AG04449 (cell line): ENCODE measurements at regions of chr10 and their contacts with region 1.

Region 1: DNA sequence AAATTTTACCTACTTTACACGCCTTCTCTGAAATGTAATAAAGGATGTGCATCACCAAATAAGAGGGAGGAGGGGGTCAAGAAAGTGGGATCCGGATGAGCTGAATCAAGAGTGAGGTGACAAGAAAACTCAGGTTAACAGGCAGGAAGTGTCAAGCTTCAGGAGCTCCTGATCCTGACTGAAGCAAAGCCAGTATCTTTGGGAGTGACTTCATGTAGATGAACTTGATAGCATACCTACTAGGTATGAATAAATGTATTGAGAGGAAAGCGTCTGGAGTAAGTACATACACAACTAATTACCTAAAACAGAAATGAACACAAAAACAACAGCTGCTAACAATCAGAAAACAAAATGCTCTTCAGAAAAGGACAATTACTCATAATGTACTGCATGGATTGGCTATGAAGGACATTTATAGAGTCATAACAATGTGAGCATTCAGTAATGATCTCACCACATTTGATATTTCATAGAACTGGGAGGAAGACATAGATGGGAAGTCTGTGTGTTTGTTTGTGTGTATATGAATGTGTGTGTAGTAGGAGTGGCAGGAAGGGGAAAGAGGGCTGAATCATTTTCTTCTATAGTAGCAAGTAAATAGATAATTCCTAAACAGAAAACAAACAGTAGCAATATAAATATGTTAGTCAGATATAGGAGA is 29.4 kb downstream of the PRKG1 start:
- DNase-seq: no peak
- H3K4me3 ChIP-seq: no peak overlapping the region
- CTCF ChIP-seq: no peak

Region 2: GRCh38 chr10:51092402-51092801 is 11.3 kb before region 1 on chr10:
- CTCF ChIA-PET with region 1: interaction called, 14 read pairs
- POLR2A ChIA-PET with region 1: no interaction called
- DNase-seq: no peak
- H3K4me3 ChIP-seq: no peak overlapping the region
- CTCF ChIP-seq: no peak

Region 3: GRCh38 chr10:51196508-51197175 is 93.0 kb after region 1 on chr10:
- CTCF ChIA-PET with region 1: no interaction called
- POLR2A ChIA-PET with region 1: no interaction called
- DNase-seq: no peak
- H3K4me3 ChIP-seq: no peak overlapping the region
- CTCF ChIP-seq: no peak